PC-9 (cell line): ENCODE measurements at regions of chr9 and their contacts with region 1.

Region 1: DNA sequence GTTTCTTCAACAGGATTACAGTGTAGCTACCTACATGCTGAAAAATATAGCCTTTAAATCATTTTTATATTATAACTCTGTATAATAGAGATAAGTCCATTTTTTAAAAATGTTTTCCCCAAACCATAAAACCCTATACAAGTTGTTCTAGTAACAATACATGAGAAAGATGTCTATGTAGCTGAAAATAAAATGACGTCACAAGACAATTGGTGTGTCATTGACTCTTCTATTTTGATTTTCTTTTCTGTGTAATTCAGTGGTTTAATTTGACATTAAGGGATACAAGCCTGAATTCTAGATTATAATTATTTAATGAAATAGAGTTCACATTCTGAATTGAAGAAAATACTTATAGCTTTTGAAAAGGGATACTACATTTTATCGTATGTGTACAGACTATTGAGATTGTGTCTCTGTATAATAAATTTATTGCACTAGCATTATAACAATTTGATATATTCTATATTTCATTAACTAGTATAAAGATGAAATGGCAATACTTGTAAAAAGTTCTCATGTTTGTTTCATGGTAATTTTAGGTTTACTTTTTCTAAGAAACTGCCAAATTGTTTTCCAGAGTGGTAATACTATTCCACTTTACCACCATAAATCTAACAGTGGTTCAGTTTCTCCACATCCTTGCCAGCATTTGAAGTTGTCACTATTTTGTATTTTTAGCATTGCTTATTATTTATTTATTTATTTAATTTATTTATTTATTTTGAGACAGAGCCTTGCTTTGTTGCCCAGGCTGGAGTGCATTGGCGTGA is 18.7 kb downstream of the ANXA1 start:
- DNase-seq: no peak
- H3K4me3 ChIP-seq: no peak overlapping the region
- H3K27ac ChIP-seq: no peak overlapping the region
- H3K4me1 ChIP-seq: no peaks in the 10 kb centered on the region
- H3K27me3 ChIP-seq: no peaks in the 10 kb centered on the region
- CTCF ChIP-seq: no peak

Region 2: DNA sequence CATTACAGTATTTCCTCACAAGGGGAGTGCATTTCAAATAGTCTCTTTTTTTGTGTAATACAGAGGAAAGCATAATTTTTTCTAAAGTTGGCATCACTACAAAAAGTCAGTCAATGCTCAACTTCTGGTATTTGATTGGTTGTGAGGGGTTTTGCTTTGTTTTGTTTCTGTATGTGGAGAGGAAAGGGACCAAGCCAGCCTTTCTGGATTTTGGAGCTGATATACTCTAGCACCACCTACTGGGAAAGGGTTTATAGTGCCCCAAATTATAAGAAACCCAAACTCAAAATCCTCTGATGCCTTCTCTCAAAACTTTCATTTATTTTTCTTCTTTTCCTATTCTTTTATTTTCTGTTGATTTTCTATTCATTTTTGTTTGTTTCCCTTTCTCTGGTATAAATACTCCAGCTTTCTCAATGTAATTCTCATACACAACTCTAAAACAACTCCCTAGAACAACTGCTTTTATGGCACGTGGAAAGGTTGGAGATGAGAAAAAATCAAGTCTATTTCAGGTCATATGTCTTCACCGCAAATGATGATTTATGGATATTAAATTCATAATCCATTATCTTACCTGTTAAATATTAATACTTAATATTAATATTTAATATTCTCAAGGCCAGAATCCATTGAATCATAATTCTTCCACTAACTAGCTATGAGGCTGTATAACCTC is 88.3 kb before region 1 on chr9:
- CTCF ChIA-PET with region 1: no interaction called
- POLR2A ChIA-PET with region 1: no interaction called
- intact Hi-C with region 1: no loop called
- DNase-seq: no peak
- H3K4me3 ChIP-seq: no peak overlapping the region
- H3K27ac ChIP-seq: no peak overlapping the region
- H3K4me1 ChIP-seq: peaks cover 22% of the 10 kb centered on the region
- H3K27me3 ChIP-seq: no peaks in the 10 kb centered on the region
- CTCF ChIP-seq: peak; percentile 78

Region 3: DNA sequence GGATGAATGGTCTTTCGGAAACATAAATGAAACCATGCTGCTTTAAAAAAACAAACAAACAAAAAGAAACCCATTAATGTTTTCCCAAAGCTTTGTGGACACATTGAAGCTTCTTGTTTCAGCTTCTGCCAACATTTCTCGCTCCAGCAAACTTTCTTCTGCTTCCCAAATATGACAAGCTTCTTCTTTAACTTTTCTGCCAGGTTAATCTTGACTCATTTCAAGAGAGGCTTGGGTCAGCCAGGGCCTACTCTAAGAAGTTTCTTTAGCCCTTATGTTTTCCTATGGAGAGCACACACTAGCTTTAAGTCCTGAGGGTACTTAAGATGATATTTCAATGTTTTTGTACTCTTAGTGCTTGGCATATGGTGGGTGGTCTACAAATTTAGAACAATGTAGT is 12.6 kb before region 1 on chr9:
- CTCF ChIA-PET with region 1: no interaction called
- POLR2A ChIA-PET with region 1: interaction called, 17 read pairs
- intact Hi-C with region 1: no loop called
- DNase-seq: no peak
- H3K4me3 ChIP-seq: no peak overlapping the region
- H3K27ac ChIP-seq: no peak overlapping the region
- H3K4me1 ChIP-seq: peaks cover 4% of the 10 kb centered on the region; the same call in 1 of the 2 replicates
- H3K27me3 ChIP-seq: no peaks in the 10 kb centered on the region
- CTCF ChIP-seq: no peak

Region 4: DNA sequence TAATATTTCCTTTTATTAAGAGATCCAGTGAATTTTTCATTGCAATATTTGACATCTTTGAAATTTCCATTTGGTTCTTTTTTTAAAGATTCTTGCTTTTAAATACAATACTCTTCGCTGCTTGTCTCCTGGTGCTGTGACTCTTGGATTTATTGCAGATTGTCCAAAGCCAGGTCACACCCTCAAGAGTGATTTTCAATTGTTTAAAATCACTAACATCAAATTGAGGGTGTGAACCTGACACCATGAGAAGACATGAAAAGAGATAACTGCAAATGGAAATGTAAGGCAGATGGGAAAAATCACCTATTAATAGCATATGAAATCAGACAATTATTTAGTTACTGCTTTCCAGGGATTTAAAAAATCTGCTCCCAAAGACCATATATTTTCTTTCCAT is 23.9 kb after region 1 on chr9:
- CTCF ChIA-PET with region 1: no interaction called
- POLR2A ChIA-PET with region 1: no interaction called
- intact Hi-C with region 1: no loop called
- DNase-seq: no peak
- H3K4me3 ChIP-seq: no peak overlapping the region
- H3K27ac ChIP-seq: no peak overlapping the region
- H3K4me1 ChIP-seq: no peaks in the 10 kb centered on the region
- H3K27me3 ChIP-seq: no peaks in the 10 kb centered on the region
- CTCF ChIP-seq: no peak

Region 5: DNA sequence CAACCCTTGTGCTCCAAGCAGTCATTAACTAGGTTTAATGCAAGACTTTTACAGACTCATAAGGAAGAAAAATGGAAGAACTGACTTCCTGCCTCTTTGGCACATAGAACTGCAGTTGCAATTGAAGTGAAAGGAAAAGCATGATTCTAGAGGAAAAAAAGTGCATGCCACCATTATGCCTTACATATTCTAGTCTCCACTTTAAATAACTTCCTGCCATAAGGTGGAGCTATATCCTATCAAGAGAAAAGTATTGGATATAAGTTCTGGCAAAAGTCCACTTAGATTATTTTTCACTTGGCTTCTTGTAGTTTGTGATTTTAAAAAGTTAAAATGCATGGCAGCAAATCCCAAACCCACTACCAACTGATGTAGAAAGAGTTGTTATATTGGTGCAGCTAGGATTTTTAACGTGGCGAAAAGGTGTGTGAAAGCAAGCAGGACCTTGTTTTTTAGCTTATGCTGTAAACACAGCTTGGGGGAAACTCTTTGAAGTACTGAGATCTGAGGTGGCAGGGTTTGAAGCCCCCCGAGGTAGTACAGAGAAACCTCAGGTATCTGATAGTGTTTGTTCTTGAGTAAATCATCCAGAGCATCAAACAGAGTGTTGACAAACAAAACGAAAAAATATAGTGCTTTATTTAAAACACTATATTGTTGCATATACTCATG is 99.2 kb after region 1 on chr9:
- CTCF ChIA-PET with region 1: no interaction called
- POLR2A ChIA-PET with region 1: no interaction called
- intact Hi-C with region 1: no loop called
- DNase-seq: no peak
- H3K4me3 ChIP-seq: no peak overlapping the region
- H3K27ac ChIP-seq: no peak overlapping the region
- H3K4me1 ChIP-seq: peaks cover 7% of the 10 kb centered on the region
- H3K27me3 ChIP-seq: no peaks in the 10 kb centered on the region
- CTCF ChIP-seq: peak; percentile 43; the same call in 1 of the 2 replicates